ENCODE measurements at regions of chr17 and their contacts with region 1.

Region 1: DNA sequence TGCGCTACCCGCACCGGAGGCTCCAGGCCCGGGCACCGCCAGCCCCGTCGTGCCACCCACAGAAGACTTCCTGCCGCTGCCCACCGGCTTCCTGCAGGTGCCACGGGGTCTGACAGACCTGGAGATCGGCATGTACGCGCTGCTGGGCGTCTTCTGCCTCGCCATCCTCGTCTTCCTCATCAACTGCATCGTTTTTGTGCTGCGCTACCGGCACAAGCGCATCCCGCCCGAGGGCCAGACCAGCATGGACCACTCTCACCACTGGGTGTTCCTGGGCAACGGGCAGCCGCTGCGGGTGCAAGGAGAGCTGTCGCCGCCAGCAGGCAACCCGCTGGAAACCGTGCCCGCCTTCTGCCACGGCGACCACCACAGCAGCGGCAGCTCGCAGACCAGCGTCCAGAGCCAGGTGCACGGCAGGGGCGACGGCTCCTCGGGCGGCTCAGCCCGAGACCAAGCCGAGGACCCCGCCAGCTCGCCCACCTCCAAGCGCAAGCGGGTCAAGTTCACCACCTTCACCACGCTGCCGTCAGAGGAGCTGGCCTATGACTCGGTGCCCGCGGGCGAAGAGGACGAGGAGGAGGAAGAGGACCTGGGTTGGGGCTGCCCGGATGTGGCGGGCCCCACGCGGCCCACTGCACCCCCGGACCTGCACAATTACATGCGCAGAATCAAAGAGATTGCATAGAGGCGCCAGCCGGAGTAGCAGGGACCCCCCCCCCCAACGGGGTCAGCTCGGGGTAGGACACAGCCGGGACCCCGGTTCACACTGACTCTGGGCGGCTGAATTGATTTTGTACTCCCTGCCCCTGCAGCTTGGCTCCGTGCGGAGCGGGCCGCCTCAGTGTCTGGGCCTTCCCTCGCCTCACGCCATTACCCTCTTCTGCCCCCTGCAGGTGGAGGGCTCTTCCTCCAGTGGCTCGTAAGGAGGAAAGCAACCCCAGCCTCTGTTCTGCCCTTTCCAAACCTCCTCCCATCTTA is 58.5 kb downstream of the TMEM132E start:
- DNase-seq: peak; percentile 51 to 82 (median 66)
- H3K4me3 ChIP-seq: peak overlapping the region; percentile 17 to 67 (median 43)
- H3K27ac ChIP-seq: peak overlapping the region in 5 of 59 donors; percentile 9 to 74 (median 21)
- H3K27me3 ChIP-seq: peaks cover 0 to 5% (median 0%) of the 10 kb centered on the region in 45 donors
- CTCF ChIP-seq: peak; percentile 48 to 96 (median 87)

Region 2: DNA sequence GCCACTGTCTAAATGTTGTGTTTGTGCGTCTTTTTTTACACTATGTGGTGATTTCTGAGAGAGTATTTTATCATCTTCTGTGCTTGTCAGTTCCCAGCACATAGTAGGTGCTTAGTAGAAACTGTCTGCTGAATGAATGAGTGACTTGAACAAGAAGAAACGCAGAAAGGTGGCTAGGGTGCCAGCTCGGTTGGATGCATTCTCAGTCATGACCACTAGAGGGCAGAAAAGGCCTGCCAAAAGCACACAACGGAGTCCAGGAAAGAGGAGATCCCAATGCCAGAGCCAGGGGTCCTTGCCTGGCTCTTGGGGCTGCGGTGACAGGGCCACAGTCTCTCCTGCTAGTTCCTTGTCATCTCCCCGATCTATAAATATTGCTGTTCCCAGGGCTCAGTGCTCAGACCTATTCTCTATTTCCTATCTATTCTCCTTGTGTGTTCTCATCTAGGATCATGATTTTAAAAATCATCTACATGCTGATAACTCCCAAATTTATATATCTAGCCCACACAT is 217.5 kb before region 1 on chr17:
- intact Hi-C with region 1: loop called (anchors 5 kb)
- DNase-seq: peak in 9 of 10 donors; percentile 41 to 76 (median 65)
- H3K4me3 ChIP-seq: no peak overlapping the region
- H3K27ac ChIP-seq: no peak overlapping the region
- H3K27me3 ChIP-seq: peaks cover 0 to 52% (median 17%) of the 10 kb centered on the region in 45 donors
- CTCF ChIP-seq: peak; percentile 86 to 99 (median 95)

Region 3: GRCh38 chr17:34542700-34543336 is 95.0 kb before region 1 on chr17:
- intact Hi-C with region 1: loop called (anchors 1 to 2 kb)
- DNase-seq: peak in 6 of 10 donors; percentile 28 to 58 (median 49)
- H3K4me3 ChIP-seq: no peak overlapping the region
- H3K27ac ChIP-seq: no peak overlapping the region
- H3K27me3 ChIP-seq: peaks cover 0 to 10% (median 0%) of the 10 kb centered on the region in 45 donors
- CTCF ChIP-seq: peak; percentile 78 to 98 (median 92)

Region 4: DNA sequence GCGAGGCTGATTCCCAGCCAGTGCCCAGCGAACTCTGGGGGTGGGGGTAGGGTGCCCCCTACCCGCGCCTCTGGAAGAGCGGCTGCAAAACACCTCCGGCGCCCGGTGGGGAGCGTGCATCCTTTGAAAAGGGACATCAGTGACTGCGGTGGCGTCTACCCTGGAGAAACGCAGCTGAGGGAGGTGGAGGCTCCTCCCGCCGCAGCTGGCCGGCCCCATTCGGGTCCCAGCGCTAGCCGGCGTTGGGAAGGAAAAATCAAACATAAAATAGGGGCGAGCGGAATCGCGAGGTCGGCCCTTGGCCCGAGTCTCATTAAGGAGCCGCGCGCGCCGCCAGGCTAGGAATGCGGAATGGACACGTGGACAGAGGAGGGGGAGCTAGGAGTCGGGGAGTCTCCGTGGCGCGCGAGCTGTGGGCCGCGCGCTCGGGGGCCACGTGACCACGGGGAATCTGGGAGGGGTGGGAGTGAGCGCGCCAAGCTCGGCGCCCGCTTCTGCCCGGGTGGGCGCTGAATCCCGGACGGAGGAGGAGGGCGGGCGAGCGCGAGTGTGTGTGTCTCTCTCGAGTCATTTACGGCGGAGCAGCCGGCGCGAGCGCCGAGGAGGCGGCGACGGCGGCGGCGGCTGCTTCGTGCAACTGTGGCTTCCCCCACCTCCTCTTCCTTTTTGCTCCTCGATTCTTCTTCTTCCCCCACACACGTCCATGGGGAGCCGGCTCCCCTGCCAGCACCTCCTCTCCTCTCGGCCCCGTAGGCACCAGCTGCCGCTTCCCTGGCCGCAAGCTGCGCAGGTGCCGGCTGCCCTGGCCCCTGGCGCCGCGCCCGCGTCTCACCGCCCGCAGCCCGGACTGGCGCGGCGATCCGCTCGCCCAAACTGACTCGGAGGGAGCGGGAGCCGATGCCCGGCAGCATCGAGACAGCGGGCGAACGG is 58.6 kb before region 1 on chr17 and contains the start of gene TMEM132E:
- intact Hi-C with region 1: loop called (anchors 2 to 5 kb)
- DNase-seq: peak; percentile 72 to 88 (median 84)
- H3K4me3 ChIP-seq: peak within 1 kb of the TSS; percentile 51 to 89 (median 71)
- H3K27ac ChIP-seq: peak within 1 kb of the TSS in 52 of 59 donors; percentile 5 to 90 (median 72)
- H3K27me3 ChIP-seq: peaks cover 0 to 19% (median 0%) of the 10 kb centered on the region in 45 donors
- CTCF ChIP-seq: peak in 17 of 56 donors; percentile 4 to 40 (median 20)
- total RNA-seq, gene TMEM132E: 4.4 to 21.1 (median 11.1) TPM

Region 5: DNA sequence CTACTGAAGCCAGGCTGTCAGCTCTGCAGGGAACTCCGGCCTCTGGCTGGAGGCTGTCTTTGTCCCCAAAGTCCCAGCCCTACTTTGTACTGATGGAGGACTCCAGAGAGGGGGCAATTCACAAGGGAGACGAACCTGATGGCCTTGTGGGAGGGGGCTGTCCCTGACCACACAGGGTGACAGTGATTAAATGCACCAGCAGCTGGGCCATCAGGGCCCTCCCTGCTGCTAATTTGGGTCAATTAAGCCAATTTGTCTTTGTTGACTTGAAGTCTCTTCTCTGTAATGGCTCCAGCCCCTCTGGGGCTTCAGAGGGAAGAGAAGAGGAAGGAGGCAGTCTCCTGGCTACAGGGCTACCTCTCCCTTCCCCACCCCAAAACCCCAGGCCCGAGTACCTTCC is 36.4 kb before region 1 on chr17:
- intact Hi-C with region 1: loop called in 1 of 2 experiments (anchors 5 kb)
- DNase-seq: no peak
- H3K4me3 ChIP-seq: no peak overlapping the region
- H3K27ac ChIP-seq: peak overlapping the region in 19 of 59 donors; percentile 7 to 72 (median 52)
- H3K27me3 ChIP-seq: no peaks in the 10 kb centered on the region
- CTCF ChIP-seq: no peak

Region 6: DNA sequence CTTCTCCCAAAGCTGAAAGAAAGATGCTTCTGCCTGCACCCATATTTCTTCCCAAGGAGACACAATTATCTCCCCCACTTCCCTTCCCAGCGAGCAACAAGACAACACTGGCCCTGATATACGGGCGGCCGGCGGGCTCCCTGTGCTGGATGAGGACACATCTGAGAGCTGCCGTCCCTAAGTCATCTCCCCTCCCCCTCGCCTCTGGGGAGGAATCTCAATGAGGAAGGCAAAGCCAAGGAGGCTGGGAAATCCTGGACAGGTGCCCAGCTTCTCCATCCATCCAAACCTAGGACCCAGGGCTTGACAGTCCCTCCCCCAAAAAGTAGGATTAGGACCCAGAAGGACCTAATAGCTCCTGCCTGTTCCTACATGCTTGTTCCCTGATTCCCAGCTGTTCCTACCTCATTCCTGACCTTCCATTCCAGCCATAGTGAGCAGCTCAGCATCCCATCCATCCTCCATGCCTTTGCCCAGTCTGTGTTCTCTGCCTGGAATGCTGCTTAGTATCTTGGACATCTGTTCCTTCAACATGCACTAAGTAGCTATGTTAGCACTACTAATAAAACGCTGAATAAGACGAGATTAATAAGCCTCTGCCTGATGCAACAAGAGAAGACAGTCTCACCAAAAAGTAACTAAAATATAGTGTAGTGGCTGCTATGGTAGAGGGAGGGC is 155.5 kb after region 1 on chr17:
- intact Hi-C with region 1: no loop called
- DNase-seq: no peak
- H3K4me3 ChIP-seq: no peak overlapping the region
- H3K27ac ChIP-seq: no peak overlapping the region
- H3K27me3 ChIP-seq: peaks cover 0 to 8% (median 0%) of the 10 kb centered on the region in 45 donors
- CTCF ChIP-seq: no peak

Measured in dorsolateral prefrontal cortex (tissue), 120 donors.